Sigmoid colon (tissue), 7 donors: ENCODE measurements at regions of chr2 and their contacts with region 1.

Region 1: DNA sequence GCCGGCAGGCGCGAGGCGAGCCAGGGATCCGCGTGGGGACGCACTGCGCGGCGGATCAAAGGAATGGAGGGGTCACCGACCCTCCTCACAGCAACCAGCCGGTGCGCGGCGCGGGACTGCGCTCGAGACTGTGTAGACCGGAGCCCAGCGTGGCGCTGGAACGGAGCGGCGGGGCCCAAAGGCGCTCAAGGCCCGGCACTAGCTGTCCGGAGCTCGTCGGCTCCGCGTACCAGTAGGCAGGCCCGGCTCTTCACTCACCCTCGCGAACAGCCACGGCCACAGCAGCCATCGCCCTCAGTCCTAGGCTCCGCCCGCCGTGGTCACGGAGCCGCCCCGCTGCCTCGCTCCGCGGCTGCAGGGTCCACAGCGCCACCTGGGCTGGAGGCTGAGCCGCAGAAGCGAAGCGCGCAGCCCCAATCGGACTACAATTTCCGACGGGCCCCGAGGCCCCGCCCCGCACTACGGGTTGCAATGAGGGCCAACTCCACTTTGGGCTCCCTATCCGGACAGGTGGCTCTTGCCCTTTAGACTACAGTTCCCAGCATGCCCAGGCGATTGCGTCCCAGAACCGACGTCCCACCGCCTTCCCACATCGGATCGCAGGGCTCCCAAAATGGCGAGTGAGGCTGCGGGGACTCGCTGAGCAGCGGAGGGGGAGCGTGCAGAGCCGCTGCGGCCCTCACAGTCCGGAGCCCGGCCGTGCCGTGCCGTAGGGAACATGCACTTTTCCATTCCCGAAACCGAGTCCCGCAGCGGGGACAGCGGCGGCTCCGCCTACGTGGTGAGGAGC is at the starts of genes EIF2B4 and SNX17:
- DNase-seq: peak; percentile 100
- H3K4me3 ChIP-seq: peak within 1 kb of the TSS; percentile 71 to 98 (median 92)
- H3K27ac ChIP-seq: peak within 1 kb of the TSS; percentile 92 to 99 (median 95)
- H3K4me1 ChIP-seq: peaks cover 0 to 39% (median 33%) of the 10 kb centered on the region in 4 donors
- H3K27me3 ChIP-seq: no peaks in the 10 kb centered on the region
- CTCF ChIP-seq: peak; percentile 23 to 46 (median 35)
- EP300 ChIP-seq: peak in 2 of 4 donors; percentile 37 to 52
- POLR2A ChIP-seq: peak; percentile 25 to 45
- total RNA-seq, gene EIF2B4: 41.5 to 64.2 (median 54.8) TPM
- total RNA-seq, gene SNX17: 71.2 to 102 (median 98.1) TPM

Region 2: GRCh38 chr2:27322766-27323595 is 47.2 kb before region 1 on chr2 and contains the start of gene MPV17:
- intact Hi-C with region 1: loop called (anchors 2 kb)
- DNase-seq: peak; percentile 97
- H3K4me3 ChIP-seq: peak within 1 kb of the TSS; percentile 69 to 86 (median 79)
- H3K27ac ChIP-seq: peak within 1 kb of the TSS; percentile 92 to 95 (median 94)
- H3K4me1 ChIP-seq: peaks cover 0 to 30% (median 20%) of the 10 kb centered on the region in 4 donors
- H3K27me3 ChIP-seq: no peaks in the 10 kb centered on the region
- CTCF ChIP-seq: no peak
- EP300 ChIP-seq: peak in 1 of 4 donors; percentile 11
- POLR2A ChIP-seq: peak; percentile 78
- total RNA-seq, gene MPV17: 48.1 to 68.6 (median 61.1) TPM

Region 3: GRCh38 chr2:27356382-27357181 is 13.6 kb before region 1 on chr2 and contains the start of gene GTF3C2:
- intact Hi-C with region 1: loop called (anchors 1 kb)
- DNase-seq: peak; percentile 97
- H3K4me3 ChIP-seq: peak within 1 kb of the TSS; percentile 52 to 94 (median 84)
- H3K27ac ChIP-seq: peak within 1 kb of the TSS; percentile 79 to 93 (median 86)
- H3K4me1 ChIP-seq: peaks cover 0 to 38% (median 34%) of the 10 kb centered on the region in 4 donors
- H3K27me3 ChIP-seq: no peaks in the 10 kb centered on the region
- CTCF ChIP-seq: no peak
- EP300 ChIP-seq: peak in 1 of 4 donors; percentile 6
- POLR2A ChIP-seq: peak in 1 of 2 donors; percentile 33
- total RNA-seq, gene GTF3C2: 23.3 to 46.5 (median 28.9) TPM

Region 4: DNA sequence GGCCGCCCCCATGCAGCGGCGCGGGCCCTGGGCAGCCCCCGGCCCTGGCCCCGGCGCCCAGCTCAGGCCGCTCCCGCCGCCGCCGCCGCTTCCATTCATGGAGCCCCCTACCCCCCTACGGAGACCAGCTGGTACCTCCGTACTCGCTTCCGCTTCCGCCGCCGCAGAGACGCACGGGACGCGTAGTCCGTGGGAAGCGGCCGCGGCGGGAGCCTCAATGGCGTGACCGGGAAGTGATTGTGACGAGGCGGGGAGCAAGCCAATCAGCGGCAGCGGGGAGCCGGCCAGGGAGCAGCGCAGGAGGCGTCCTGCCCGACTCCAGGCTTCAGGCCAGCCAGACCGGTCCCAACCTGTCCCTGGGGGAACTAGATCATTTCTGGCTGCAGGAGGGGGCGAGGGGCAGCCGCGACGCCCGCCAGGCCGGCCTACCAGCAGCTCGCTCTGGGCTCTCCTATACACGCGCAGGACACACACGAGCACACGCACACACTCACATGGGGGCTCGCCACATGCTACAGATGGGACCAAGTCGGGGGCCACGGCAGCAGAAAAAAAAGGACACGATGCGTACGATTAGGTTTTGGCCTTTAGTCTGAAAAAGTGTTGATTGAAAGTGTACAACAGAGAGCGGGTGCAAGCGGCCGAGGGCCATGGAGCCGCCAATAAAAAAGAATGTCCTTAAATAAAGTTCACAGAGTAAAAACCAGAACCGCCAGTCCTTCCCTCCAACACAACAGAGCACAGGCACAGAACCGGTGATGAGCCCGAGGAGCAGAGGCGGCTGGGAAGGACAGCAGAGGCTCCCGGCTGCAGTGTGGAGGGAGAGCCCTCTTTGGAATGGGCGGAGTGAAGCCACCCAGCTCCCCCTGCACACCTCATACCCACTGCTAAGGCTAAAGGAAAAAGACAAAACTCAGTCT is 10.7 kb after region 1 on chr2 and contains the start of gene ZNF513:
- intact Hi-C with region 1: loop called (anchors 1 kb)
- DNase-seq: peak; percentile 99
- H3K4me3 ChIP-seq: peak within 1 kb of the TSS; percentile 51 to 87 (median 72)
- H3K27ac ChIP-seq: peak within 1 kb of the TSS; percentile 84 to 90 (median 88)
- H3K4me1 ChIP-seq: peaks cover 0 to 23% (median 21%) of the 10 kb centered on the region in 4 donors
- H3K27me3 ChIP-seq: no peaks in the 10 kb centered on the region
- CTCF ChIP-seq: no peak
- EP300 ChIP-seq: peak in 1 of 4 donors; percentile 29
- POLR2A ChIP-seq: peak; percentile 20 to 22
- total RNA-seq, gene ZNF513: 5.0 to 8.7 (median 7.2) TPM

Region 5: GRCh38 chr2:27428213-27428977 is 58.2 kb after region 1 on chr2 and contains the start of gene NRBP1:
- intact Hi-C with region 1: loop called (anchors 2 kb)
- DNase-seq: peak; percentile 95
- H3K4me3 ChIP-seq: peak within 1 kb of the TSS; percentile 89 to 99 (median 96)
- H3K27ac ChIP-seq: peak within 1 kb of the TSS; percentile 97 to 100 (median 98)
- H3K4me1 ChIP-seq: peaks cover 0 to 48% (median 40%) of the 10 kb centered on the region in 4 donors
- H3K27me3 ChIP-seq: no peaks in the 10 kb centered on the region
- CTCF ChIP-seq: no peak
- EP300 ChIP-seq: no peak
- POLR2A ChIP-seq: peak; percentile 92 to 93
- total RNA-seq, gene NRBP1: 78.5 to 93.5 (median 86.4) TPM